Motor neuron (in vitro differentiated cells): ENCODE measurements at regions of chr13 and their contacts with region 1.

Region 1: GRCh38 chr13:101127741-101128353 is 288.5 kb downstream of the NALCN start:
- ATAC-seq: peak; percentile 40 to 72 (median 51)
- H3K4me3 ChIP-seq: no peak overlapping the region
- H3K27ac ChIP-seq: no peak overlapping the region
- H3K4me1 ChIP-seq: no peaks in the 10 kb centered on the region

Region 2: DNA sequence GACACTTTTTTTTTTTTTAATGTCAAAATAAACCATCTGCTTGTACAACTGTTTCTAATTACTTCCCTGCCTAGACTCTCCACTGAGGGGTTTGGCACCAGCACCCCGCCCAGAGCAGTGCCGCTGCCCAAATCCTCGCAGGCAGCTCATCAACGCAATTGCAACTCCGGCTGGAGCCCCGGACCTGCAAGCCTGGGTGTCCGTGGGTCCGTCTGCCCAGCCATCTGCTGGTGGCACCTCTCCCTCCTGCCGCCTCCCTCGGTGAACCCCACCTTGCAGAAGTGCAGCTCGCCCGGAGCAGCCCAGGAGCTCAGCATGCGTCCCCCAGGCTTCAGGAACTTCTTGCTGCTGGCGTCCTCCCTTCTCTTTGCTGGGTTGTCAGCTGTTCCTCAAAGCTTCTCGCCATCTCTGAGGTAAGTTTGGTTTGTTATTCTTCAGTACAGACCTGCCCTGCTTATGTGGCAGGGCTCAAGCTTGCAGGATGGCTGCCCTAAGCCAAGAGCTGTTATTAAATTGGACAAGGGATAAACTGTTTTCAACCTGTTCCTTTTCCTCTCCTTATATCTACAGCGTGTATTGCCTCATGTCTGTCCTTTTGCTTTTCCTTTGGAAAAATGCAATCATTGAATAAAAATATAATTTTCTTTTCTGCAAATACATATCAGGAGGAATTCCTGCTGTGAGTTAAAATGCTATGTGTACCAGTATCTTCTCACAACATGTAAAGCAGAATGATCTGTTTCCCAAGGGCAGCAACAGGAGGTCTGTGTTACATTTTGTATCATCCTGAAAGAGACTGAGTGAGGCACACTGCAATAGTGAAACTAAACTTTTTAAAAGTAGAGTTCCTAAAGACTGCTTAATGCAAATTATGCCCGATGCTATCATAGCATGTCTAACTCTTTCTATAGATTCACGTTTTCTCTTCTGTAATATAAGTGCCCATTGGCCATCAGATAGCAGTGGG is 325.0 kb after region 1 on chr13 and contains the start of gene ITGBL1:
- in situ Hi-C with region 1: loop called in 1 of 9 experiments (anchors 25 kb)
- ATAC-seq: peak in 3 of 8 experiments; percentile 12 to 61 (median 20)
- H3K4me3 ChIP-seq: no peak within 1 kb of the TSS
- H3K27ac ChIP-seq: no peak within 1 kb of the TSS
- H3K4me1 ChIP-seq: no peaks in the 10 kb centered on the region
- total RNA-seq, gene ITGBL1: 3.2 to 187 (median 7.1) TPM in 4 of 8 experiments, not detected in the others

Region 3: GRCh38 chr13:101631395-101631794 is 503.5 kb after region 1 on chr13:
- in situ Hi-C with region 1: no loop called
- ATAC-seq: peak in 3 of 8 experiments; percentile 26 to 75 (median 63)
- H3K4me3 ChIP-seq: no peak overlapping the region
- H3K27ac ChIP-seq: no peak overlapping the region
- H3K4me1 ChIP-seq: no peaks in the 10 kb centered on the region

Region 4: DNA sequence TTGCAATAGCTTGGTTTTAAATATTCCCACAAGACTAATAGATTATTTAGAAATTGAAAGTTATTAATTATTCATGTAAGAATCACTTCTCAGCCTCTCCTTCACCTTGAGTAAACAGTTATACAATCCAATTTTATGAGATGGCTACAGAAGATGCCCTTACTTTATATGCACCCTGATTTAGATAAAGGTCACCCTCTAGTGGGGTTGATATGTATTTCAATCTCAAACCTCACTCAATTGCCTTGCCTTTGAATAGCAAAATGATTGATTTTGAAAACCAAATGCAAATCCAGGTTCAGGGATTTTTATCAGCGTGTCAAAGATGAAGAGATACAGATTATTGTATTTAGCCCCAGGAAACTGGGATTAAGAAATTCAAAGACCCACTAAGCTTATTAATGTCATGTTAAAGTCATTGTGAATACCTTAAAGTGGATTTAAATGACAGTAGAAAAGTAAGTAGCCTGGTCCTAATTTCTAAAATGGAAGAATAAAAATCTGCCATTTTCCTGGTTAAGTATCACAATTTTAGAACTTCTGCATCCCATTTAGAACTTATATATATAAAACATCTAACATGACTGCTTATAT is 629.7 kb after region 1 on chr13:
- in situ Hi-C with region 1: loop called in 1 of 9 experiments (anchors 25 kb)
- ATAC-seq: peak in 4 of 8 experiments; percentile 44 to 80 (median 74)
- H3K4me3 ChIP-seq: no peak overlapping the region
- H3K27ac ChIP-seq: no peak overlapping the region
- H3K4me1 ChIP-seq: peaks cover 0 to 6% of the 10 kb centered on the region in 2 donors

Region 5: GRCh38 chr13:101916108-101916757 is 788.4 kb after region 1 on chr13:
- in situ Hi-C with region 1: loop called in 1 of 9 experiments (anchors 25 kb)
- ATAC-seq: peak; percentile 72 to 90 (median 80)
- H3K4me3 ChIP-seq: peak overlapping the region; percentile 42 to 65 (median 51)
- H3K27ac ChIP-seq: no peak overlapping the region
- H3K4me1 ChIP-seq: peaks cover 9 to 15% of the 10 kb centered on the region in 2 donors